Vagina (tissue), 2 donors: ENCODE measurements at regions of chr4 and their contacts with region 1.

Region 1: GRCh38 chr4:127604949-127605709 is 27.6 kb upstream of the INTU start:
- DNase-seq: no peak
- H3K4me3 ChIP-seq: no peak overlapping the region
- H3K27ac ChIP-seq: no peak overlapping the region
- H3K4me1 ChIP-seq: no peaks in the 10 kb centered on the region
- H3K27me3 ChIP-seq: no peaks in the 10 kb centered on the region
- CTCF ChIP-seq: peak; percentile 17 to 40 (median 39)
- POLR2A ChIP-seq: no peak

Region 2: DNA sequence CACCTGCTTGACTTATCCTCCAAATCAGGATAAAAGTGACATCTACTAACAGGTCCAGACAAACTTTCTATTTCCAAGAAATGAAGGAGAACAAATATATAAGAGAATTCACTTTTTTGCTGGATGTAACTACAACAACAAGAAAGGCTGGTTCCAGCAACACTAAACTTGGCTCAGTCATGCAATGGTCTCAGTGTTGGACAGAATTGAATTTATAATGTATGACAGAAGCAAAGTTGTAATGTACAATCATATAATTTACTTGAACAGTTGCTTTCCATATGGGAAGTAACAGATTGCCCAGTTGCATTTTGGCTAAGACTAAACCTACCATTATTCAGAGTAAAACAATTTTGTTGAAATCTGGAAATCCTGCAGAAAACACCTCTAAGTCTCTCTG is 155.7 kb before region 1 on chr4:
- intact Hi-C with region 1: no loop called
- DNase-seq: no peak
- H3K4me3 ChIP-seq: no peak overlapping the region
- H3K27ac ChIP-seq: no peak overlapping the region
- H3K4me1 ChIP-seq: peaks cover 4% of the 10 kb centered on the region
- H3K27me3 ChIP-seq: no peaks in the 10 kb centered on the region
- CTCF ChIP-seq: no peak
- POLR2A ChIP-seq: no peak

Region 3: GRCh38 chr4:127732613-127733328 is 127.6 kb after region 1 on chr4:
- intact Hi-C with region 1: loop called (anchors 5 kb)
- DNase-seq: no peak
- H3K4me3 ChIP-seq: no peak overlapping the region
- H3K27ac ChIP-seq: no peak overlapping the region
- H3K4me1 ChIP-seq: no peaks in the 10 kb centered on the region
- H3K27me3 ChIP-seq: no peaks in the 10 kb centered on the region
- CTCF ChIP-seq: peak; percentile 12 to 45 (median 20)
- POLR2A ChIP-seq: no peak